Aorta (tissue), 5 donors: ENCODE measurements at regions of chr18 and their contacts with region 1.

Region 1: DNA sequence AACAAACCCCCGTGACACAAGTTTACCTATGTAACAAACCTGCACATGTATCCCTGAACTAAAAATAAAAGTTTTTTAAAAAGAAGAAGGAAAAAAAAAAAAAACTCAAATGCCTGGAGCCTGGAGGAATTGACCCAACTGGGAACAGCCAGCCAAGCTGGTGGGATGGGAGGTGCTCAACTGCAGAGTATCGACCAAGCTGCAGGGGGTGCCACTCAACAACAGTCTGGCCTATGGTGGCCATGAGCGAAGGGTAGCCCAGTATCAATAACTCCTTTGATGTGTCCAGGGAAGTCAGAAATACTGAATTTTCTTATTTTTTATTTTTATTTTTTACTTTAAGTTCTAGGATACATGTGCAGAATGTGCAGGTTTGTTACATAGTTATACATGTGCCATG is 310.3 kb upstream of the DLGAP1 start:
- DNase-seq: no peak
- ATAC-seq: no peak
- H3K4me3 ChIP-seq: no peak overlapping the region
- H3K27ac ChIP-seq: no peak overlapping the region
- H3K4me1 ChIP-seq: no peaks in the 10 kb centered on the region
- H3K27me3 ChIP-seq: no peaks in the 10 kb centered on the region

Region 2: GRCh38 chr18:3857544-3857943 is 907.9 kb before region 1 on chr18:
- intact Hi-C with region 1: no loop called
- DNase-seq: no peak
- ATAC-seq: no peak
- H3K4me3 ChIP-seq: no peak overlapping the region
- H3K27ac ChIP-seq: no peak overlapping the region
- H3K4me1 ChIP-seq: no peaks in the 10 kb centered on the region
- H3K27me3 ChIP-seq: no peaks in the 10 kb centered on the region

Region 3: GRCh38 chr18:4831791-4832375 is 66.5 kb after region 1 on chr18:
- intact Hi-C with region 1: loop called in 1 of 2 experiments (anchors 10 kb)
- DNase-seq: no peak
- ATAC-seq: no peak
- H3K4me3 ChIP-seq: no peak overlapping the region
- H3K27ac ChIP-seq: no peak overlapping the region
- H3K4me1 ChIP-seq: no peaks in the 10 kb centered on the region
- H3K27me3 ChIP-seq: no peaks in the 10 kb centered on the region

Region 4: GRCh38 chr18:5029592-5029991 is 264.2 kb after region 1 on chr18:
- intact Hi-C with region 1: loop called in 1 of 2 experiments (anchors 10 kb)
- DNase-seq: no peak
- ATAC-seq: no peak
- H3K4me3 ChIP-seq: no peak overlapping the region
- H3K27ac ChIP-seq: no peak overlapping the region
- H3K4me1 ChIP-seq: peaks cover 0 to 2% of the 10 kb centered on the region in 2 donors
- H3K27me3 ChIP-seq: no peaks in the 10 kb centered on the region

Region 5: GRCh38 chr18:5180254-5180653 is 414.9 kb after region 1 on chr18:
- intact Hi-C with region 1: no loop called
- DNase-seq: no peak
- ATAC-seq: no peak
- H3K4me3 ChIP-seq: no peak overlapping the region
- H3K27ac ChIP-seq: no peak overlapping the region
- H3K4me1 ChIP-seq: no peaks in the 10 kb centered on the region
- H3K27me3 ChIP-seq: no peaks in the 10 kb centered on the region